PC-9 (cell line): ENCODE measurements at regions of chr3 and their contacts with region 1.

Region 1: GRCh38 chr3:172129870-172130683 is 90.7 kb downstream of the FNDC3B start:
- DNase-seq: peak; percentile 95 to 99
- H3K4me3 ChIP-seq: peak overlapping the region; percentile 11
- H3K27ac ChIP-seq: peak overlapping the region; percentile 78
- H3K4me1 ChIP-seq: peaks cover 97% of the 10 kb centered on the region
- H3K27me3 ChIP-seq: no peaks in the 10 kb centered on the region
- CTCF ChIP-seq: no peak

Region 2: DNA sequence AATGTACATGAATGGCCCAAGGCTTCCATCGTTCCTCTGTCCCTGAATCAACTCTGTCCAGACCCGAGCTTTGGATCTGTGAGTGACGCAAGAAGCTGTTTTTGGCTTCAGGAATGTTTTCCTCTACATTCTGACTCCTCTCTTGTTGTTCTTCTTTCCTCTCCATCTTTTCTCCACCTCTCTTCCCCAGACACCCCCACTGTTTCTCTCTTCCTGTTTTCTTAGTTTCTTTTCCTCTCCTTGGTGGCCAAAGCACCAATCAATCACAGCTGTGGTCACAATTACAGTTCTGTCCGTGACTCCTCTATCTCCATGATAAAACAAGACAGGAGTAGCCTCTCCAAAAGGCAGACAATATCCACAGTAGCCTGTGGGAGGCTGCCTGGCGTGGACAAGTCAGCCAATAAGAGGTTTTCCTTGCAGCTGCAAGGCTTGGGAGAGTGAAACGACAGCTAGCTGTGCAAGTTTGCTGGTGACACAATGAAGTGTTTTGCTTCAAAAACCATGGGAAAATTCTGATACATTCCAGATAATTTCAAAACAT is 291.8 kb before region 1 on chr3:
- CTCF ChIA-PET with region 1: no interaction called
- POLR2A ChIA-PET with region 1: no interaction called
- intact Hi-C with region 1: no loop called
- DNase-seq: no peak
- H3K4me3 ChIP-seq: no peak overlapping the region
- H3K27ac ChIP-seq: no peak overlapping the region
- H3K4me1 ChIP-seq: peaks cover 8% of the 10 kb centered on the region
- H3K27me3 ChIP-seq: no peaks in the 10 kb centered on the region
- CTCF ChIP-seq: no peak

Region 3: DNA sequence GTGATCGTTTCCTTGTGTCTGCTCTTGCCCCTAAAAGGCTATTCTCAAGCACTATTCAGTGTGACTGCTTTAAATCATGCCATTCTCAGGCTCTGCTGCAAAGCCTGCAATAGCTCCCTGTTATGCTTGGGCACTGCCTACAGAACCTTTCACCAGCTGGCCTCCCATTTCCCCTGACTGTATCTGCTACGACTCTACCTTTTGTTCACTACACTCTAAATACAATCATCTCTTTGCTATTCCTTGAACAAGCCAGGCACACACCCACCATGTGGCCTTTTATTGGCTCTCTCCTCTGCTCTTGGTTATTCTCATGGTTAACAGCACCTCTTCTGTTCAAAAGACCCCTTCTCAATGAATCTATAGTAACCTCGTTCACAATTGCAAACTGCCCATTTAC is 120.3 kb before region 1 on chr3:
- CTCF ChIA-PET with region 1: interaction called, 14 read pairs
- POLR2A ChIA-PET with region 1: no interaction called
- intact Hi-C with region 1: no loop called
- DNase-seq: no peak
- H3K4me3 ChIP-seq: no peak overlapping the region
- H3K27ac ChIP-seq: no peak overlapping the region
- H3K4me1 ChIP-seq: peaks cover 10% of the 10 kb centered on the region; the same call in 1 of the 2 replicates
- H3K27me3 ChIP-seq: no peaks in the 10 kb centered on the region
- CTCF ChIP-seq: no peak

Region 4: GRCh38 chr3:172096881-172097420 is 33.1 kb before region 1 on chr3:
- CTCF ChIA-PET with region 1: no interaction called
- POLR2A ChIA-PET with region 1: no interaction called
- intact Hi-C with region 1: loop called (anchors 1 kb)
- DNase-seq: peak; percentile 52 to 95
- H3K4me3 ChIP-seq: no peak overlapping the region
- H3K27ac ChIP-seq: peak overlapping the region; percentile 38
- H3K4me1 ChIP-seq: peaks cover 78% of the 10 kb centered on the region
- H3K27me3 ChIP-seq: no peaks in the 10 kb centered on the region
- CTCF ChIP-seq: no peak

Region 5: DNA sequence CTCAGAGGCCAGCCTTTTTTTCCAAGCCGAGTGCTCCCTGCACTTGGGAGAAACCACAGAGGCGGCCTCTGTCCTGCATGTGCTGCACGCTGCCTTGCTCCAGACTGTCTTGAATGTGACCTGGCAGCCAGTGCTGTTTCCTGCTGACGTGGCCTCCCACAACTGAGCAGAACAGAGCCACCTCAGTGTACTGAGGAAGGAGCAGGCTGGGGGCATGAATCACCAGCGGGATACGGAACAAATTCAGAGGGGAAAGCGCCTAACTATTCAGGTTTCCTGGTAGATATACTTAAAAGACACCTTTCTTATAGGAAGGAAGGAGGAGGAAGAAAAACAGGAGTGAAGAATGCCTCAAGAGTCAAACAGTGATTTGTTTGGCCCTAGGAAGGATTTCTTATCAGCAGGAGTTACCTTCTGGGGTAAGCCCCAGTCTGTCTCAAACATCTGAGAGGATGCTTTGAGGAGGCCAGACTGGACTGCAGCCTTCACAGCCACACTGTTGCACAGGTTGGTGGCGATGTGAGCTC is 23.3 kb after region 1 on chr3:
- CTCF ChIA-PET with region 1: no interaction called
- POLR2A ChIA-PET with region 1: no interaction called
- intact Hi-C with region 1: loop called (anchors 2 kb)
- DNase-seq: peak; percentile 92 to 99
- H3K4me3 ChIP-seq: peak overlapping the region; percentile 28; the same call in 1 of the 2 replicates
- H3K27ac ChIP-seq: peak overlapping the region; percentile 96
- H3K4me1 ChIP-seq: peaks cover 98% of the 10 kb centered on the region
- H3K27me3 ChIP-seq: no peaks in the 10 kb centered on the region
- CTCF ChIP-seq: no peak

Region 6: GRCh38 chr3:172171396-172172075 is 41.5 kb after region 1 on chr3:
- CTCF ChIA-PET with region 1: interaction called, 3 read pairs
- POLR2A ChIA-PET with region 1: no interaction called
- intact Hi-C with region 1: loop called (anchors 2 kb)
- DNase-seq: no peak
- H3K4me3 ChIP-seq: no peak overlapping the region
- H3K27ac ChIP-seq: peak overlapping the region; percentile 9; the same call in 1 of the 2 replicates
- H3K4me1 ChIP-seq: peaks cover 77% of the 10 kb centered on the region
- H3K27me3 ChIP-seq: no peaks in the 10 kb centered on the region
- CTCF ChIP-seq: no peak